Ovary (tissue), 10 donors: ENCODE measurements at regions of chr22 and their contacts with region 1.

Region 1: DNA sequence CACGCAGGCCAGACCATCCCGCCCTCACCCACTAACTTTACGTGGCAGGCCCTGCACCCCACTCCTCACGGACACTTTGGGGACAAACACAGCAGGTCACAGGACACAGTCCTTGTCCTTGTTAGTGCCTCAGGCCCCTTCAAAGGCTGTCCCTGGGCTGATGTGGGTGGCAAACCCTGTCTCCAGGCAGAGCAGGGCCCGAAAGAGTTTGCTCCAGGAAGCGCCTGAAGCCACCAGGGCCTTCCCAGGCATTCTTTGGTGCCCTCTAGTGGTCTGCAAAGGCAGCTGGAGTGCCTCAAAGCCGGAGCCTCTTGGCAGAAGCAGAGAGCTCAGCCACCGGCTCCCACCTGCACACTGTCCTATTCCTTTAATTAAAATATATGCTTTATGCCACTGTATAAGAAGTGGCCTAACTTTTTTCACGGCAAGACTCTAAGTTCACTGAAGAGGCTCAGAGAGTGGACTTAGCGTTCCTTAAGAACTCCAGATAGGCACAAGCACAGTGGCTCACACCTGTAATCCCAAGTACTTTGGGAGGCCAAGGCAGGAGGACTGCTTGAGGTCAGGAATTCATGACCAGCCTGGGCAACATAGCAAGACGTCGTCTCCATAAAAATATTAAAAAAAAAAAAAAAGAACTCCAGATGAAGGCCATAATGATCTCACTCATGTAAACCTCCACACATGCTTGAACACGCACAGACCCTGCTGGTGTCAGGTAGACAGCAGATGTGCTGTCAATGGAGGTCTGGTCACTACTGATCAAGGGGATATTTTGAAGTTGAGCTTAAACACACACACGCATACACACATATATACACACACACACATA is 11.1 kb downstream of the TXN2 start:
- DNase-seq: peak; percentile 78 to 86 (median 83)
- H3K4me3 ChIP-seq: no peak overlapping the region
- H3K27ac ChIP-seq: no peak overlapping the region
- H3K4me1 ChIP-seq: peaks cover 7% of the 10 kb centered on the region
- H3K27me3 ChIP-seq: no peaks in the 10 kb centered on the region
- CTCF ChIP-seq: peak; percentile 87 to 96 (median 90)
- EP300 ChIP-seq: no peak
- POLR2A ChIP-seq: no peak

Region 2: GRCh38 chr22:36301384-36301828 is 169.0 kb before region 1 on chr22:
- intact Hi-C with region 1: loop called (anchors 1 to 5 kb)
- DNase-seq: peak; percentile 67 to 88 (median 83)
- H3K4me3 ChIP-seq: no peak overlapping the region
- H3K27ac ChIP-seq: no peak overlapping the region
- H3K4me1 ChIP-seq: no peaks in the 10 kb centered on the region
- H3K27me3 ChIP-seq: no peaks in the 10 kb centered on the region
- CTCF ChIP-seq: peak; percentile 92 to 95 (median 94)
- EP300 ChIP-seq: no peak
- POLR2A ChIP-seq: no peak

Region 3: GRCh38 chr22:36536717-36537116 is 66.3 kb after region 1 on chr22:
- intact Hi-C with region 1: no loop called
- DNase-seq: no peak
- H3K4me3 ChIP-seq: no peak overlapping the region
- H3K27ac ChIP-seq: no peak overlapping the region
- H3K4me1 ChIP-seq: no peaks in the 10 kb centered on the region
- H3K27me3 ChIP-seq: no peaks in the 10 kb centered on the region
- CTCF ChIP-seq: no peak
- EP300 ChIP-seq: no peak
- POLR2A ChIP-seq: no peak